Uterus (tissue), 4 donors: ENCODE measurements at regions of chr11 and their contacts with region 1.

Region 1: DNA sequence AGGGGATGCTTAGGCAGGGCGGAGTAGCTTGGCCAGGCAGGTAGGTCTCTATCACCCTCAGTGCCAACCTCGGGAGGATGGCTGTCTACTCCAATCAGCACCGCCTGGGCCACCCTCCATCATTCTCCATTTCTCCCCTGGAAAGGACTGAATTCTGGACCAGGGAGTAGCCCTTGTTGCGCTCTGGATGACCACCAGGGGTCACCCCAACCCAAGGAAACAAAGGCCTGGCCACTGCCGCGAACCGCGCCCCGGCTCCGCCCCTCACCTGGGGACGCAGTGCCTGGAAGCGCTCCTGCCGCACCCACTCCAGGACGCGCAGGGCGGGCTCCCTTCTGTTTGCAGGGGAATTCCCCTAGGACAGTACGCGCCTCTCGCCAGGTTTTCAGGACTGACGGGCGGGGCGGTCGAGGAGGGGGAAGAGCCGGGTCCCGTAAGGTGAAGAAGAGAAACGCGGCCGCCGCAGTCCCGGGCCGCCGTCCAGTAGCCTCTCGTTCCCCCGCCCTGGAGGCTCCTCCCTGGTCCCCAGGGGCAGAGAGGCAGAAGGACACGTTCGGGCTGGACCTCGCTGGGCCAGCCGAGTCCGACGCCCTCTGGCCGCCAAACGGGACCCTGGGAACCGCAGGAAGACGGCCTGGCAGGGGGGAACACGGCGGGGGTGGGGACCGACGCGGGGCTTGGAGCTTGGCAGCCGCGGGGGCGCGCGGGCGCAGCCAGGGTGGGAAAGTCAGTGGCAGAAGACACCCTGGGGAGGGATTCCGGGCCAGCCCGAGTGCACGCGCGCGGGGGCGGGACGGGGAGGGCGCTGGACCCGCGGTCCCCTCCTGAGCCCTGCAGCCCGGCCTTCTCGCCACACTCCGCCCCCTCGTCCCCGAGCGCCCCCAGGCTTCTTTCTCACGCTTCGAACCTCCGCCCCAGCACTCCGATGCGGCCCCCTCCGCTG is 7.1 kb downstream of the SCN4B start:
- DNase-seq: peak; percentile 77 to 81
- H3K4me3 ChIP-seq: peak overlapping the region; percentile 45 to 59
- H3K27ac ChIP-seq: peak overlapping the region; percentile 24 to 55
- H3K4me1 ChIP-seq: peaks cover 0 to 7% of the 10 kb centered on the region in 2 donors
- H3K27me3 ChIP-seq: no peaks in the 10 kb centered on the region
- CTCF ChIP-seq: peak; percentile 92 to 96 (median 94)
- POLR2A ChIP-seq: no peak

Region 2: GRCh38 chr11:117970400-117971024 is 175.0 kb before region 1 on chr11:
- intact Hi-C with region 1: no loop called
- DNase-seq: no peak
- H3K4me3 ChIP-seq: no peak overlapping the region
- H3K27ac ChIP-seq: no peak overlapping the region
- H3K4me1 ChIP-seq: no peaks in the 10 kb centered on the region
- H3K27me3 ChIP-seq: no peaks in the 10 kb centered on the region
- CTCF ChIP-seq: no peak
- POLR2A ChIP-seq: no peak

Region 3: DNA sequence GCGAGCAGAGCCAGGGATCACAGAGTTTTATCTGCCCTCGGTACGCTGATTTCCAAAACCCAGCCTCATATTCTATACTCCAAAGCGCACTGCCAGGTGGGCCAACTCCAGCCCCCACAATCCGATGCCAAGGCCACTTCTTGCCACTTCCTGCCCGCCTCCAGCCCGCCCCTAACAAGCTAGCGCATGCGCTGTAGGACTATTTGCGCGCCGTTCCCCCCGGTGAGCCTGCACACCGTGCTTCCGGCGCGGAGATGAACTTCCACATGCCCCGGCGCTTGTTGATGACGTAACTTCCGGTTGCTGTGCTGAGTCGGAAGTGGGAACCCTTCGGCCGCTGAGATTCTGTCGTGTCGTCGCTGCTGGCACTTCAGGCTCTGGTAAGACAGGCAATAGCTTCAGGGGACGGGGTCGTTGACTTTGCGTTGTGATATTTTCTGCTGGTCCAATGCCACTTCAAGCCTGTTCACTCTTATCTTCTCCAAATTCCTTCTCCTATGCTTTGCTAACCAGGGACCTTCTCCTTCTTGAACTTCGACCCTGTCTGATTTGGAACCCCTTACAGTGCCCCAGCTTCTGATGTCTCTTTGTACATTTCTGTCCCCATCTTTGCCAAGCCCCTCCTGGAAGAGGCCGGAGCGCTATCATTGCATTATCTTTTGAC is 213.9 kb after region 1 on chr11 and contains the start of gene UBE4A:
- intact Hi-C with region 1: loop called (anchors 10 kb)
- DNase-seq: peak; percentile 92 to 94
- H3K4me3 ChIP-seq: peak within 1 kb of the TSS; percentile 70 to 73
- H3K27ac ChIP-seq: peak within 1 kb of the TSS; percentile 7 to 43
- H3K4me1 ChIP-seq: no peaks in the 10 kb centered on the region
- H3K27me3 ChIP-seq: no peaks in the 10 kb centered on the region
- CTCF ChIP-seq: peak in 1 of 4 experiments; percentile 7
- POLR2A ChIP-seq: peak in 1 of 2 donors; percentile 46
- total RNA-seq, gene UBE4A: 31.0 to 41.2 (median 33.3) TPM

Region 4: GRCh38 chr11:118488480-118489109 is 343.0 kb after region 1 on chr11:
- intact Hi-C with region 1: loop called (anchors 10 kb)
- DNase-seq: peak; percentile 51 to 66
- H3K4me3 ChIP-seq: no peak overlapping the region
- H3K27ac ChIP-seq: no peak overlapping the region
- H3K4me1 ChIP-seq: no peaks in the 10 kb centered on the region
- H3K27me3 ChIP-seq: no peaks in the 10 kb centered on the region
- CTCF ChIP-seq: peak; percentile 73 to 79 (median 76)
- POLR2A ChIP-seq: no peak